Mammary epithelial cell (primary cell): ENCODE measurements at regions of chr14 and their contacts with region 1.

Region 1: GRCh38 chr14:23057757-23058653 is 685 bp upstream of the CDH24 start:
- DNase-seq: peak; percentile 74
- H3K4me3 ChIP-seq: peak overlapping the region; percentile 50 to 65 (median 55)
- H3K27ac ChIP-seq: no peak overlapping the region
- H3K4me1 ChIP-seq: peaks cover 31% of the 10 kb centered on the region
- H3K27me3 ChIP-seq: no peaks in the 10 kb centered on the region
- CTCF ChIP-seq: peak; percentile 82 to 93

Region 2: GRCh38 chr14:22929104-22929847 is 128.7 kb before region 1 on chr14 and contains the start of gene PRMT5:
- CTCF ChIA-PET with region 1: no interaction called
- dilution Hi-C with region 1: no loop called
- in situ Hi-C with region 1: no loop called
- intact Hi-C with region 1: loop called (anchors 1 kb)
- DNase-seq: peak; percentile 99
- H3K4me3 ChIP-seq: peak within 1 kb of the TSS; percentile 87 to 97 (median 94)
- H3K27ac ChIP-seq: peak within 1 kb of the TSS; percentile 87
- H3K4me1 ChIP-seq: peaks cover 27% of the 10 kb centered on the region
- H3K27me3 ChIP-seq: no peaks in the 10 kb centered on the region
- CTCF ChIP-seq: no peak
- total RNA-seq, gene PRMT5: 61.3 to 120 TPM

Region 3: GRCh38 chr14:22994762-22995275 is 63.2 kb before region 1 on chr14:
- CTCF ChIA-PET with region 1: interaction called, 3 read pairs
- dilution Hi-C with region 1: no loop called
- in situ Hi-C with region 1: loop called in 1 of 2 experiments (anchors 5 kb)
- intact Hi-C with region 1: loop called (anchors 1 kb)
- DNase-seq: peak; percentile 63
- H3K4me3 ChIP-seq: no peak overlapping the region
- H3K27ac ChIP-seq: no peak overlapping the region
- H3K4me1 ChIP-seq: peaks cover 9% of the 10 kb centered on the region
- H3K27me3 ChIP-seq: no peaks in the 10 kb centered on the region
- CTCF ChIP-seq: peak; percentile 36 to 52

Region 4: DNA sequence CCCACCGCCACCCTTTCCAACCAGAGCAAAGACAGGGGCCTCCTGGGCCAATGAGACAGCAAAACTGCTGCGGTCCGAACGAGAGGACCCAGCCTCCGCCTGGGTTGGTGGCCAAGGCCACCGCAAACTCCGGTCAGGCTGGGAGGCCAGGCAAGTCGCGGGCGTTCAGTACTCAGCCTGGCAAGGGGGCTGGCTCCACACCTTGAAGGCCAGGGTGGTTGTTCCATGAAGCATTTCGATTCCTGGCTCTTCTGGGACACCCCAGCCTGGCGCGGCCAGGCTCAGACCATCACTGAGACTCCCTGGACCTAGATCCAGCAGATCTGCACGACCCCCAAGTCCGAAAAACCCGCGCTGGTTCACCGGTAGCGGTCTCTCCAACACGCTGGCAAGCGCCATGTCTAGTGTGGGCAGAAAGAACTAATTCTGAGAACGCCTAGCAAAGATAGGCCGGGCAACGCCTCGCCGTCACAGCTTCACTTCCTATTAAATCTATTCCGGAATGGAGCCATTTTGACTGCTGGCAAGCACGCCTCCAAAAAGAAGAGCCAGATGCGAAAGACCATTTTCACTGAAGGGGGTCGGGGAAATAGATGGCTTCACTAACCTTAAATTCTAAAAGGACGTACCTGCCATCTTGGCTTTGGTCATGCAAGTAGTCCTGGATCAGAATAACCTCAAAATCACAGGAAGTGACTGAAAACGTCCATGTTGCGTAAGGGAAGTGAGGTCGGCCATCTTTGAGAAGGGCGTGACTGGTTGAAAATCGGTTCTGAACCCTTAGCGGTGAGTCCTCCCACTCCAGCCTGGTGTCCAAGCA is 23.3 kb before region 1 on chr14 and contains the start of gene PSMB5:
- CTCF ChIA-PET with region 1: no interaction called
- dilution Hi-C with region 1: no loop called
- in situ Hi-C with region 1: no loop called
- intact Hi-C with region 1: loop called (anchors 2 kb)
- DNase-seq: peak; percentile 93
- H3K4me3 ChIP-seq: peak within 1 kb of the TSS; percentile 82 to 95 (median 88)
- H3K27ac ChIP-seq: peak within 1 kb of the TSS; percentile 83
- H3K4me1 ChIP-seq: peaks cover 7% of the 10 kb centered on the region
- H3K27me3 ChIP-seq: no peaks in the 10 kb centered on the region
- CTCF ChIP-seq: no peak
- total RNA-seq, gene PSMB5: 145 to 152 TPM

Region 5: DNA sequence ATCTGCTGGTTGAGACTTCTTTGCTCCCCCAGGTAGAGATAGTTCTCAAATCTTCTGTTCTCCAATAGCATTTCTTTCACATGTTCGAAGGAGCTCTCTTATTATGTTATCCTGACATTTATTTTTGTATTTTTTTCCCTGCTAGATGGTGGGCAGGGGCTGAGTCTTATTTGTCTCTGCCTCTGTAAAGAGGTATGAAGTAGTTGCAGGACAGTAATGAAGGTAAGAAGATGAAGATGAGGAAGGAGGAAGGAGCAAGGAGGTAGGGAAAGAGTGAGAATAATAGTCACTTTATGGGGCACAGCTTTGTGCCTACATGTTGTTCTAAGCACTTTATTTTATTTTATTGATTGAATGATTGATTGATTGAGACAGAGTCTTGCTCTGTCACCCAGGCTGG is 51.8 kb after region 1 on chr14:
- CTCF ChIA-PET with region 1: no interaction called
- dilution Hi-C with region 1: no loop called
- in situ Hi-C with region 1: no loop called
- intact Hi-C with region 1: loop called (anchors 1 kb)
- DNase-seq: no peak
- H3K4me3 ChIP-seq: no peak overlapping the region
- H3K27ac ChIP-seq: no peak overlapping the region
- H3K4me1 ChIP-seq: peaks cover 9% of the 10 kb centered on the region
- H3K27me3 ChIP-seq: no peaks in the 10 kb centered on the region
- CTCF ChIP-seq: no peak